ENCODE measurements at regions of chr14 and their contacts with region 1.

Region 1: DNA sequence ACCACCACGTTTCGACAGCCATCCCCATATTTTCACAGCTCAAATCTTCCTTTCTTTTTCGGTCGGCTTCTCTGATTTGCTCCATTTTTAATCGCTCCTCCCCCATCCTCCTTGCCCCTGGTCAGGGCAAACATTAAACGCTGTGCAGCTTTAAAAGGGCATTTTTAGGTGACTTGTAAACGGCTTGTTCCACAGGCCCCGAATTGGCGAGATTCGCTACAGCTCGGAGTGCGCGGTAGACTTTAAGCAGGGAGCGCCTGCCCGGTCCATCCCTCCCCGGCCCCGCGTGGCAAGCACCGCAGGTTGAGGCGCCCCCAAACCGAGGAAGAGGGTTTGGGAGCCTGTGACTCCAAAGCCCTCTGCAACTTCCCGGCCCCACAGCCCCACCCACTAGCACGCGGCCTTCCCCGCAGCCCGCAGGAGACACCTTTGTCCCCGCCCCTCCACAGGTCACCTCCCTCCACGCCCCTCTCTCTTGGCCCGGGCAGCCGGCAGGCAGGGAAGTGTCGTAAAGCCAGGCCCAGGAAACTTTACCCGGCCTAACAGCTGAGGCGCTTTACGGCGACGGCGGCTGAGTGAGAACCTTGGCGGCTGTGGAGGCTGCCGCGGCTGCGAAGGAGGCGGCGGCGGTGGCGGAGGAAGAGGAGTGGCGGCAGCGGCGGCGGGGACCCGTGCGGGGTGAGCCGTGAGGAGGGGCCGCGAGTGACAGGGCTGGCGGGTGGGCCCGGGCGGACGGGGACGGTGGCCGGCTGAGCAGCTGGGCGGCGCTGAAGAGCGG is at the start of gene NAA30:
- DNase-seq: peak; percentile 80 to 98 (median 90)
- ATAC-seq: peak; percentile 91
- H3K4me3 ChIP-seq: peak within 1 kb of the TSS; percentile 91
- H3K4me3 Mint-ChIP-seq: peak within 1 kb of the TSS; percentile 94
- H3K27ac ChIP-seq: peak within 1 kb of the TSS; percentile 75 to 89
- H3K27ac Mint-ChIP-seq: peak within 1 kb of the TSS; percentile 93
- H3K4me1 ChIP-seq: peaks cover 19% of the 10 kb centered on the region
- H3K4me1 Mint-ChIP-seq: peaks cover 53% of the 10 kb centered on the region
- H3K27me3 ChIP-seq: no peaks in the 10 kb centered on the region
- H3K27me3 Mint-ChIP-seq: no peaks in the 10 kb centered on the region
- CTCF ChIP-seq: no peak
- total RNA-seq, gene NAA30: 25.8 to 27.7 TPM

Region 2: DNA sequence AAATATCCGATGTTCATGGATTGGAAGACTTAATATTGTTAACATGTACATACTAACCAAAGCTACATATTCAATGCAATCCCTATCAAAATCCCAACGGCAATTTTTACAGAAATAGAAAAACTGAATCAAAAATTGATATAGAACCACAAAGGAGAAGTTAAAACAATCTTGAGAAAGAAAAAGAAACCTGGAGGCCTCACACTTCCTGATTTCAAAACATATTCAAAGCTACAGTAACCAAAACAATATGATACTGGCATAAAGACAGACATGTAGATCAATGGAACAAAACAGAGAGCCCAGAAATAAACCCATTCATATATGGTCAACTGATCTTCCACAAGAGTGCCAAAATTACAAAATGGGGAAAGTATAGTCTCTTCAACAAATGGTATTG is 1277.4 kb before region 1 on chr14:
- CTCF ChIA-PET with region 1: no interaction called
- POLR2A ChIA-PET with region 1: no interaction called
- intact Hi-C with region 1: loop called in 1 of 2 experiments (anchors 5 kb)
- DNase-seq: no peak
- ATAC-seq: no peak
- H3K4me3 ChIP-seq: no peak overlapping the region
- H3K4me3 Mint-ChIP-seq: no peak overlapping the region
- H3K27ac ChIP-seq: no peak overlapping the region
- H3K27ac Mint-ChIP-seq: no peak overlapping the region
- H3K4me1 ChIP-seq: peaks cover 12% of the 10 kb centered on the region
- H3K4me1 Mint-ChIP-seq: peaks cover 29% of the 10 kb centered on the region
- H3K27me3 ChIP-seq: no peaks in the 10 kb centered on the region
- H3K27me3 Mint-ChIP-seq: no peaks in the 10 kb centered on the region
- CTCF ChIP-seq: no peak

Region 3: GRCh38 chr14:57244106-57244505 is 146.1 kb before region 1 on chr14:
- CTCF ChIA-PET with region 1: no interaction called
- POLR2A ChIA-PET with region 1: no interaction called
- intact Hi-C with region 1: no loop called
- DNase-seq: no peak
- ATAC-seq: no peak
- H3K4me3 ChIP-seq: no peak overlapping the region
- H3K4me3 Mint-ChIP-seq: no peak overlapping the region
- H3K27ac ChIP-seq: no peak overlapping the region
- H3K27ac Mint-ChIP-seq: no peak overlapping the region
- H3K4me1 ChIP-seq: no peaks in the 10 kb centered on the region
- H3K4me1 Mint-ChIP-seq: peaks cover 5% of the 10 kb centered on the region
- H3K27me3 ChIP-seq: no peaks in the 10 kb centered on the region
- H3K27me3 Mint-ChIP-seq: no peaks in the 10 kb centered on the region
- CTCF ChIP-seq: no peak

Region 4: GRCh38 chr14:57268161-57269069 is 121.8 kb before region 1 on chr14 and contains the starts of genes AP5M1 and EXOC5:
- CTCF ChIA-PET with region 1: no interaction called
- POLR2A ChIA-PET with region 1: interaction called, 38 read pairs
- intact Hi-C with region 1: loop called (anchors 2 kb)
- DNase-seq: peak; percentile 81 to 97 (median 89)
- ATAC-seq: peak; percentile 84
- H3K4me3 ChIP-seq: peak within 1 kb of the TSS; percentile 76
- H3K4me3 Mint-ChIP-seq: peak within 1 kb of the TSS; percentile 99
- H3K27ac ChIP-seq: peak within 1 kb of the TSS; percentile 91
- H3K27ac Mint-ChIP-seq: peak within 1 kb of the TSS; percentile 99
- H3K4me1 ChIP-seq: peaks cover 17% of the 10 kb centered on the region
- H3K4me1 Mint-ChIP-seq: peaks cover 87% of the 10 kb centered on the region
- H3K27me3 ChIP-seq: no peaks in the 10 kb centered on the region
- H3K27me3 Mint-ChIP-seq: no peaks in the 10 kb centered on the region
- CTCF ChIP-seq: no peak
- total RNA-seq, gene AP5M1: 39.2 to 40.4 TPM
- total RNA-seq, gene EXOC5: 17.1 to 18.1 TPM